Activated CD8-positive, alpha-beta T cell treated with anti-CD3 and anti-CD28 coated beads for 36 hours (primary cell): ENCODE measurements at regions of chr12 and their contacts with region 1.

Region 1: GRCh38 chr12:56688129-56688845 is at the start of gene PTGES3:
- DNase-seq: peak; percentile 99
- ATAC-seq: peak; percentile 80
- H3K4me3 Mint-ChIP-seq: peak within 1 kb of the TSS; percentile 96
- H3K27ac Mint-ChIP-seq: peak within 1 kb of the TSS; percentile 98
- H3K4me1 Mint-ChIP-seq: peaks cover 11% of the 10 kb centered on the region
- H3K27me3 Mint-ChIP-seq: no peaks in the 10 kb centered on the region
- CTCF ChIP-seq: no peak
- total RNA-seq, gene PTGES3: 381 to 406 TPM

Region 2: DNA sequence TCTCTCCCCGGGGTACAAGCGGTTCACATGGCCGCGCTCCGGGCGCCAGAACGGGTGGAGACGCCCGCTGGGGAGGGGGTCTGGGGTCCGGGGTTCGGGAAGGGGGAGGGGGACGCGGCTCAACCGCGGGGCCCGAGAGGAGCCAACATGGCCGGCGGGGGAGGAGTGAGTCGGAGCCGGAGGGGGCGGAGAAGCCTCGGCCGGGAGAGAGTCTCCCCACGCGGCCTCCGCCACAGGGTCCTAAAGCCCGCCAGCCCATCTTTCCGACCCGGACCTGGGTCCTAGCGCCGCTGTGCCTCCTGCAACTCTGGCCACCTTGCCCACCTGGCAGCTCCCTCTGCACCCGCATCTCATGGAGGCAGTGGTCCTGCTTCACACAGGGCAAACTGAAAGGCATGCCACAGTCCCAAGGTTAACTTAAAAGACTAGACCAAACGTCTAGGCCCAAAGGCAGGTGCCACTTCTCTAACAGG is 58.1 kb before region 1 on chr12 and contains the start of gene BAZ2A:
- CTCF ChIA-PET with region 1: interaction called, 16 read pairs
- POLR2A ChIA-PET with region 1: interaction called, 62 read pairs
- intact Hi-C with region 1: loop called (anchors 5 kb)
- DNase-seq: peak; percentile 95
- ATAC-seq: peak; percentile 70
- H3K4me3 Mint-ChIP-seq: peak within 1 kb of the TSS; percentile 92
- H3K27ac Mint-ChIP-seq: peak within 1 kb of the TSS; percentile 85
- H3K4me1 Mint-ChIP-seq: peaks cover 68% of the 10 kb centered on the region
- H3K27me3 Mint-ChIP-seq: no peaks in the 10 kb centered on the region
- CTCF ChIP-seq: no peak
- total RNA-seq, gene BAZ2A: 80.1 to 89.3 TPM

Region 3: DNA sequence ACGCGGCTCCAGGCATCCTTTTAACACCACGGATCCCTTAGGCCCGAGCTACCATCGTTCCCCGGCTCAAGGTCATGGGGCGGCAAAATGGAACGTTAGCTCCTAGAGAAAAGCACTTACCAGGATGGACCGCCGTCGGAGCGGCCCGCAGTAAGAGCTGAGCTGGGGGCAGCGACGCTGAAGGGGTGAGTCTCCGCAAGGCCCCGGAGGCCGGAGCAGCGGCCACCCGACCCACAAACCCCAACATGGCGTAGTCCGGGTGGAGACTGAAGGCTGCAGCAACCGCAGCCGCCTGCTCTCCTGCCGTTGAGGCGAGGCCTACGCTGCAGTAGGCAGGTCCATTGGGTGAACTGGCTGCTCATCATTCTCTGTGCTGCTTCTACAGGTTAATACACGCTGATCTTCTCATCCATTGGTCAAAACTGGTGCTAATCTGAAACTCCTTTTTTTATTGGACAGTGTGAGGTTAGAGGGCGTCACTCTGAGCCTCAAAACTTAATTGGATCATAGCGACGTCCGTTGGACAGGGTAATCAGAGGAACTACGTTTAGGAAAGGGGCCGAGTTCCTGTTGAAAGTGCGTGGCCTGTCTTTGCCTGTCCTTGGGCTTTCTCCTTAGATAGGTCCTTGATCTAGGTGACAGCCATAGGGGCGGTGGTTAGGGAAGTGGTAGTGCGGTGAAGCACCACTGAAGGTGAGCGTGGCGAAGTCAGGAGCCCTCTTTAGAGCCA is 42.4 kb before region 1 on chr12 and contains the start of gene ATP5F1B:
- CTCF ChIA-PET with region 1: interaction called, 5 read pairs
- POLR2A ChIA-PET with region 1: interaction called, 20 read pairs
- intact Hi-C with region 1: no loop called
- DNase-seq: peak; percentile 97
- ATAC-seq: peak; percentile 98
- H3K4me3 Mint-ChIP-seq: peak within 1 kb of the TSS; percentile 86
- H3K27ac Mint-ChIP-seq: peak within 1 kb of the TSS; percentile 97
- H3K4me1 Mint-ChIP-seq: peaks cover 33% of the 10 kb centered on the region
- H3K27me3 Mint-ChIP-seq: no peaks in the 10 kb centered on the region
- CTCF ChIP-seq: no peak
- total RNA-seq, gene ATP5F1B: 859 to 869 TPM

Region 4: DNA sequence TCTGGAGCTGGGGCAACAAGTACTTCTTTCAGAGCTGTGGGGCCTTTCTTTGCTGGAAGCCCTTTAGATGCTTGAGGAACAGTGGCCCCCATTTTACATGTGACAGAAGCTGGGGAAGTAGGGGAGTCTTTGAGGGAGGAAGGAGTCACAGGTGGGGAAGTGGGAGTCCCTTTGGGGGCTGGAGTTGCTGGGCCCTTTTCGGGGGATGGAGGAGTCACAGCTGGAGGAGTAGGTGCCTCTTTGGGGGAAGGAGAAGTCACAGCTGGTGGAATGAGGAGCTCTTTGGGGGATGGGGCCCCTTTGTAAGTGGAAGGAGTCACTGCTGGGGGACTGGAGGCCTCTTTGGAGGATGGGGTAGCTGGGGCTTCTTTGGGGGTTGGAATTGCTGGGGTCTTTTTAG is 28.2 kb after region 1 on chr12:
- CTCF ChIA-PET with region 1: interaction called, 6 read pairs
- POLR2A ChIA-PET with region 1: interaction called, 45 read pairs
- intact Hi-C with region 1: loop called (anchors 5 kb)
- DNase-seq: no peak
- ATAC-seq: no peak
- H3K4me3 Mint-ChIP-seq: no peak overlapping the region
- H3K27ac Mint-ChIP-seq: peak overlapping the region; percentile 73
- H3K4me1 Mint-ChIP-seq: peaks cover 57% of the 10 kb centered on the region
- H3K27me3 Mint-ChIP-seq: no peaks in the 10 kb centered on the region
- CTCF ChIP-seq: no peak

Region 5: DNA sequence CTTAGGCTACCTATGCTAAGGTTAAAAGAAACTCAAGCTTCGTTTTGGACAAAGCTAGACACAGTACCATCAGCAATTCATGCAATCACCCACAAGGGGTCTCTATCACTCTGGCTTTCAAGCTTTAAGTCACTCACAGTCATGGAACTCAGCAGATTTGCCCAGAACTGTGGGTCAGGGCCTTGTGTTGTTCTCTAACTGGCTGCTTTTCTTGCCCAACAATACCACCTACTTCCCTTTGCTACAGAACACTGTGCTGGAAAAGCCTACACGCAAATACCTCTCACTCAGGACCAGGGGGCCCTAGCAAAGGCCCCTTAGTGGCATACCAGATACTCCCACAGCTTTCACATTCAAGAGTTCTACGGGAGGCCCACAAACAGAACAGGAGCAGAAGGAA is 381.2 kb after region 1 on chr12:
- CTCF ChIA-PET with region 1: interaction called, 4 read pairs
- POLR2A ChIA-PET with region 1: no interaction called
- intact Hi-C with region 1: loop called (anchors 10 kb)
- DNase-seq: peak; percentile 79
- ATAC-seq: peak; percentile 90
- H3K4me3 Mint-ChIP-seq: peak overlapping the region; percentile 62
- H3K27ac Mint-ChIP-seq: peak overlapping the region; percentile 90
- H3K4me1 Mint-ChIP-seq: peaks cover 71% of the 10 kb centered on the region
- H3K27me3 Mint-ChIP-seq: no peaks in the 10 kb centered on the region
- CTCF ChIP-seq: peak; percentile 86